ENCODE measurements at regions of chr12 and their contacts with region 1.

Region 1: GRCh38 chr12:30754709-30755394 is at the start of gene CAPRIN2:
- DNase-seq: peak; percentile 95
- ATAC-seq: peak; percentile 88
- H3K4me3 ChIP-seq: peak within 1 kb of the TSS; percentile 49 to 72 (median 71)
- H3K4me3 Mint-ChIP-seq: peak within 1 kb of the TSS; percentile 99
- H3K27ac ChIP-seq: peak within 1 kb of the TSS; percentile 52 to 79
- H3K27ac Mint-ChIP-seq: peak within 1 kb of the TSS; percentile 89
- H3K4me1 ChIP-seq: peaks cover 14 to 15% of the 10 kb centered on the region in 2 donors
- H3K4me1 Mint-ChIP-seq: peaks cover 23% of the 10 kb centered on the region
- H3K27me3 ChIP-seq: no peaks in the 10 kb centered on the region
- H3K27me3 Mint-ChIP-seq: no peaks in the 10 kb centered on the region
- CTCF ChIP-seq: peak; percentile 29
- total RNA-seq, gene CAPRIN2: 55.2 and 57.8 TPM in 2 replicates

Region 2: GRCh38 chr12:29380536-29381523 is 1374.0 kb before region 1 on chr12 and contains the start of gene ERGIC2:
- CTCF ChIA-PET with region 1: interaction called, 3 read pairs
- POLR2A ChIA-PET with region 1: no interaction called
- intact Hi-C with region 1: loop called (anchors 1 kb)
- DNase-seq: peak; percentile 98
- ATAC-seq: peak; percentile 91
- H3K4me3 ChIP-seq: peak within 1 kb of the TSS; percentile 82 to 100 (median 99)
- H3K4me3 Mint-ChIP-seq: peak within 1 kb of the TSS; percentile 89
- H3K27ac ChIP-seq: peak within 1 kb of the TSS; percentile 86 to 88
- H3K27ac Mint-ChIP-seq: peak within 1 kb of the TSS; percentile 90
- H3K4me1 ChIP-seq: peaks cover 13 to 17% of the 10 kb centered on the region in 2 donors
- H3K4me1 Mint-ChIP-seq: peaks cover 35% of the 10 kb centered on the region
- H3K27me3 ChIP-seq: no peaks in the 10 kb centered on the region
- H3K27me3 Mint-ChIP-seq: peaks cover 8% of the 10 kb centered on the region
- CTCF ChIP-seq: no peak
- total RNA-seq, gene ERGIC2: 37.2 and 40.2 TPM in 2 replicates

Region 3: DNA sequence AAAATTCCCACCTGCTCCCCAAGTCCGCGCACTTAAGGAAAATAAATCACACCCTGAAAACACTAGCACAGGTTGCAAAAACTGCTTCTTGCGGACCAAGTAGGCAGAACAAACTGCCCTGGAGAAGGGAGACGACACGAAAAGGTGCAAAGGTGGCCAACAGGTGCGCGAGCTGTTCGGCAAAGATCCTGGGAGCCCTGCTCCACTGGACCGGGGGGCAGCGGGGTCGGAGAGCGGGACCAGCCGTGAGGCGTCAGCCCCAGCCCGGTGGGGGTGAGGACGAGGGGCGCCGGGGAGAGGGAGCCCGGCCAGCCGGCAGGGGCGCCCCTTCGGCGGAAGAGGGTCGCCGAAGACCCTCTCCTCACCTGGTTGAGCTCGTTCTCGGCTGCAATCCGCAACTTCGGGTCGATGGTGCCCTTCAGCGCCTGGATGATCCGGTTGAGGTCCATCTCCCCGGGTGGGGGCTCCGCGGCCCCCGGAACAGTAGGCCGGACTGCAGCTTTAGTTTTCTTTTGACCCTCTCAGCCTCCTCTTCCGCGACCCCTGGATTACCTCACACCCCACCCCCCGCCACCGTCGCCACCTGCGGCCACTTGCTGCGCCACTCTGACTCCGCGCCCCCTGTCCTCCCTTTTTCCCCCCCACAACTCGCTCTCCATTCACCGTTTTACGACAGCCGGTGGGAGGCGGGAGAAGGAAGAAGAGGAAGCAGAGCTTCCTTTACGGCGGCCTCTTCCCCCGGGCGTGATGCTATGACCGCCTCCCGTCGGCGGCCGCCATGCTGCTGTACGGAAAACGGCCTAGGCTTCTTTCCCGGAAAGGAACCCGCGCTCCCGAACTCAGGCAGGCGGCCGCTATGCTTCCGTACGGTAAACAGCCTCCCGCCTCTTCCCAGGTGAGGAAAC is 59.4 kb before region 1 on chr12 and contains the start of gene IPO8:
- CTCF ChIA-PET with region 1: interaction called, 11 read pairs
- POLR2A ChIA-PET with region 1: interaction called, 7 read pairs
- intact Hi-C with region 1: loop called (anchors 1 kb)
- DNase-seq: peak; percentile 90
- ATAC-seq: peak; percentile 92
- H3K4me3 ChIP-seq: peak within 1 kb of the TSS; percentile 79 to 95 (median 89)
- H3K4me3 Mint-ChIP-seq: peak within 1 kb of the TSS; percentile 97
- H3K27ac ChIP-seq: peak within 1 kb of the TSS; percentile 68 to 88
- H3K27ac Mint-ChIP-seq: peak within 1 kb of the TSS; percentile 97
- H3K4me1 ChIP-seq: peaks cover 27% of the 10 kb centered on the region in 2 donors
- H3K4me1 Mint-ChIP-seq: peaks cover 42% of the 10 kb centered on the region
- H3K27me3 ChIP-seq: no peaks in the 10 kb centered on the region
- H3K27me3 Mint-ChIP-seq: no peaks in the 10 kb centered on the region
- CTCF ChIP-seq: peak; percentile 55
- total RNA-seq, gene IPO8: 58.1 and 60.2 TPM in 2 replicates

Region 4: GRCh38 chr12:30795410-30796312 is 40.8 kb after region 1 on chr12:
- CTCF ChIA-PET with region 1: interaction called, 3 read pairs
- POLR2A ChIA-PET with region 1: no interaction called
- intact Hi-C with region 1: loop called (anchors 5 kb)
- DNase-seq: peak; percentile 47
- ATAC-seq: peak; percentile 63
- H3K4me3 ChIP-seq: peak overlapping the region in 4 of 5 experiments; percentile 15 to 52 (median 48)
- H3K4me3 Mint-ChIP-seq: peak overlapping the region; percentile 78
- H3K27ac ChIP-seq: no peak overlapping the region
- H3K27ac Mint-ChIP-seq: no peak overlapping the region
- H3K4me1 ChIP-seq: peaks cover 18 to 19% of the 10 kb centered on the region in 2 donors
- H3K4me1 Mint-ChIP-seq: peaks cover 14% of the 10 kb centered on the region
- H3K27me3 ChIP-seq: peaks cover 0 to 43% (median 15%) of the 10 kb centered on the region in 4 experiments
- H3K27me3 Mint-ChIP-seq: peaks cover 54% of the 10 kb centered on the region
- CTCF ChIP-seq: no peak

Region 5: DNA sequence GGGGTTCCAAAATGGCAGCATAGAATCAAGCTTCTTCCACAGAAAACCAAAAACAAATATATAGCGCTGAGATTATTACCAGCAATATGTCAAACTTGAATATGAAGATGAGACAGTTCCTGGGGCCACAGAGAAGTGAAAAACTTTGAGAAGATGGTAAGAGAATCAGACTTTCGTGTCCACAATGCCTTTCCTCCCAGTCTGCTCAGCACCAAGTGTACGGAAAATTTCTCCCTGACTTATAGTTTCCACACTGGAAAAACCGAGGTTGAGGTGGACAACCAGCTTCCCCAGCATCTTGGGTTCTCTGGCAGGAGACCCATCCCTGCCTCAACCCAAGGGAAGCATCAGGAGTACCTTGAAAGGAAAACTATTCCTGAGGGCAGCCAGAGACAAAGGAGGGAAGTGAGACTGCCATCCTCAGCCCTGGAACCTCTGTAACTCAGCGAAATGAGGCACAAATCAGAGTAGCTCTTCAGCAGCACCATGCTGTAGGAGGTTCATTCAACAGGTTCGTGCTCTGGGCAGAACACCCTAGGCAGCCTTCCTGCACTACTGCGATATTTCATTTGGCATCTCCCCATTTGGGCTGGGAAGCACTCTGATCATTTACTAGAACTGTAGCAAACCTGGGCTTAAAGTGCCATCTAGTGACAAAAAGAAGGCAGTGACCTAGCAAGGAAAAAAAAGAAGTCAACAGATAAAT is 52.3 kb after region 1 on chr12:
- CTCF ChIA-PET with region 1: interaction called, 11 read pairs
- POLR2A ChIA-PET with region 1: no interaction called
- intact Hi-C with region 1: loop called (anchors 1 kb)
- DNase-seq: peak; percentile 71
- ATAC-seq: peak; percentile 45
- H3K4me3 ChIP-seq: no peak overlapping the region
- H3K4me3 Mint-ChIP-seq: no peak overlapping the region
- H3K27ac ChIP-seq: no peak overlapping the region
- H3K27ac Mint-ChIP-seq: no peak overlapping the region
- H3K4me1 ChIP-seq: no peaks in the 10 kb centered on the region
- H3K4me1 Mint-ChIP-seq: no peaks in the 10 kb centered on the region
- H3K27me3 ChIP-seq: peaks cover 0 to 2% (median 0%) of the 10 kb centered on the region in 4 experiments
- H3K27me3 Mint-ChIP-seq: peaks cover 23% of the 10 kb centered on the region
- CTCF ChIP-seq: peak; percentile 84

Region 6: GRCh38 chr12:30820406-30820946 is 65.6 kb after region 1 on chr12:
- CTCF ChIA-PET with region 1: no interaction called
- POLR2A ChIA-PET with region 1: no interaction called
- intact Hi-C with region 1: no loop called
- DNase-seq: no peak
- ATAC-seq: no peak
- H3K4me3 ChIP-seq: no peak overlapping the region
- H3K4me3 Mint-ChIP-seq: no peak overlapping the region
- H3K27ac ChIP-seq: no peak overlapping the region
- H3K27ac Mint-ChIP-seq: no peak overlapping the region
- H3K4me1 ChIP-seq: peaks cover 6 to 14% of the 10 kb centered on the region in 2 donors
- H3K4me1 Mint-ChIP-seq: peaks cover 16% of the 10 kb centered on the region
- H3K27me3 ChIP-seq: peaks cover 0 to 46% (median 7%) of the 10 kb centered on the region in 4 experiments
- H3K27me3 Mint-ChIP-seq: peaks cover 64% of the 10 kb centered on the region
- CTCF ChIP-seq: no peak

Region 7: GRCh38 chr12:31325877-31326631 is 571.2 kb after region 1 on chr12 and contains the start of gene SINHCAF:
- CTCF ChIA-PET with region 1: no interaction called
- POLR2A ChIA-PET with region 1: no interaction called
- intact Hi-C with region 1: loop called (anchors 2 kb)
- DNase-seq: peak; percentile 99
- ATAC-seq: peak; percentile 64
- H3K4me3 ChIP-seq: peak within 1 kb of the TSS; percentile 70 to 96 (median 93)
- H3K4me3 Mint-ChIP-seq: peak within 1 kb of the TSS; percentile 98
- H3K27ac ChIP-seq: peak within 1 kb of the TSS; percentile 97
- H3K27ac Mint-ChIP-seq: peak within 1 kb of the TSS; percentile 99
- H3K4me1 ChIP-seq: peaks cover 27 to 36% of the 10 kb centered on the region in 2 donors
- H3K4me1 Mint-ChIP-seq: peaks cover 39% of the 10 kb centered on the region
- H3K27me3 ChIP-seq: no peaks in the 10 kb centered on the region
- H3K27me3 Mint-ChIP-seq: no peaks in the 10 kb centered on the region
- CTCF ChIP-seq: no peak
- total RNA-seq, gene SINHCAF: 127 and 129 TPM in 2 replicates

Region 8: DNA sequence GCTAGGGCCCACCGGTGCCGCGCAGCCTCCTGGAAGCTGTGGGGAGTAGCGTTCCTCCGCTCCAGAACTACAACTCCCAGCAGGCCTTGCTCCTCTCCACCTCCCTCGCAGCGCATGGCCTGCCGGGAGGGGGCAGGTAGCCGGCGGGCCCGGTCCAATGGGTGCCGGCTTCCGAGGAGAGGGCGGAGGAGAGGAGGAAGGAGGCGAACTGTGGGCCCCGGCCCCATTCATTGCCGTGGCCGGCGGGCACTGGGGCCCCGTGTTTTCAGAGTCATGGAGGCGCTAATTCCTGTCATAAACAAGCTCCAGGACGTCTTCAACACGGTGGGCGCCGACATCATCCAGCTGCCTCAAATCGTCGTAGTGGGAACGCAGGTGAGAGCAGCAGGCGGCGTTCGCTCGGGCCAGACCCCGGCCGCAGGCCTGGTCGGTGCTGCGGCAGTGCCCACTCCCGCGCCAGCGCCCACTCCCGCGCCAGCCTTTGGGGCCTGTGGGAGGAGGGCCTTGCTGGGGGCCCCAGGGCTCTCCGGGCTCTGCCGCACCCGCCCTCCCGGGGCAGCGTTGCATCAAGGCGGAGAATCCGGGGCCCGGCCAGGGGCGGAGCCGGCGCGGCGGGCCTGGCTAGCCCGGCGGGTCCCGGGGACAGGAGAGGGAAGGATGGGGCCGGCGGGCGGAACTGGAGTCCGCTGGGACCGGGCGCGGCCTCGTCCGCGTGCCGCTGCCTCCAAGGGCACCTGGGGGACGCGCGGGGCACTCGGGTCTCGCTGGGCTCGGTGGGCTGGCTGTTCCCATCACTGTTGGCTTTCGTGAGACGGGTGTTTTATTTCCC is 1924.5 kb after region 1 on chr12 and contains the start of gene DNM1L:
- CTCF ChIA-PET with region 1: no interaction called
- POLR2A ChIA-PET with region 1: no interaction called
- intact Hi-C with region 1: loop called (anchors 2 kb)
- DNase-seq: peak; percentile 93
- ATAC-seq: peak; percentile 96
- H3K4me3 ChIP-seq: peak within 1 kb of the TSS; percentile 62 to 92 (median 86)
- H3K4me3 Mint-ChIP-seq: peak within 1 kb of the TSS; percentile 93
- H3K27ac ChIP-seq: peak within 1 kb of the TSS; percentile 63 to 79
- H3K27ac Mint-ChIP-seq: peak within 1 kb of the TSS; percentile 90
- H3K4me1 ChIP-seq: peaks cover 14 to 23% of the 10 kb centered on the region in 2 donors
- H3K4me1 Mint-ChIP-seq: peaks cover 34% of the 10 kb centered on the region
- H3K27me3 ChIP-seq: no peaks in the 10 kb centered on the region
- H3K27me3 Mint-ChIP-seq: no peaks in the 10 kb centered on the region
- CTCF ChIP-seq: no peak
- total RNA-seq, gene DNM1L: 74.2 and 76.0 TPM in 2 replicates

Measured in B cell (primary cell).